Gastrocnemius medialis (tissue), 4 donors: ENCODE measurements at regions of chr12 and their contacts with region 1.

Region 1: DNA sequence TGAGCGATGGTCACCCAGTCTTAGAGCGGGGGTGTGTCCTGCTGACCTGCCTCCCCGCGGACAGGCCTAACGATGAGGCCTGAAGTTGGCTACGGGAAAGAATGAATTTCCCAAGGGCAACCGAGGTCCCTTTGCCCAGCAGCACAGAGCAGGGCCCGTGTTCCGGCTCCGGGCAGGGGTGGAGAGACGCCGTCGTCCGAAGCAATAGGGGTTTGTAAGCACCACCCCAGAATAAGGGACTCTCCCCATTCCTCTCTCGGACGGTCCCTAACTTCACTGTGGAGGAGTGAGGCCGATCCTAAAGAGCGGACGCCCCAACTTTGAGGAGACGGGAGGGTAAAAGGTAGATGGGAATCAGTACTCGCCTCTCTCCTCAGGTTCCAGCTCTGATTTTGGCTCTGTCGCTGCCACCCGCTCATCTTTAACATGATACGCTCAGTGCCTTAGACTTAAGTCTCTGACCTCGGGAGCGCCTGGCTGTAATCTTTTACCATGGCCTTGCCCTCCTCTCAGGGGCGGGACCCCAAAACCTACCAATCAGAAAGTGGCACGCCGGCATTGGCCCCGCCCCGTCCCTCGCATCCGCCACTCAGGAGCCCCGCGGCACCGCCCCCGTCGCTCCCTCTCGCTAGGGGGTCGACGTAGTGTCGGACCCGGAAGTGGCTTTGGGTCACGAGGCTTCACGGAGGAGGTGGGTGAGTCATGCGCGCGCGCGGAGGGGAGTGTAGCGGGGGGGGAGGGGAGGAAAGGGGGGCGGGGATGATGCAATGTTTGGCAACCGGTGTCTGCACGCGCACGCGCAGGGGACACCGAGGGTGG is at the start of gene DDIT3:
- DNase-seq: peak; percentile 99 to 100
- ATAC-seq: peak; percentile 59 to 70
- H3K4me3 ChIP-seq: peak within 1 kb of the TSS; percentile 79 to 87 (median 82)
- H3K27ac ChIP-seq: peak within 1 kb of the TSS; percentile 93 to 99 (median 96)
- H3K4me1 ChIP-seq: peaks cover 56 to 61% of the 10 kb centered on the region in 2 donors
- H3K27me3 ChIP-seq: no peaks in the 10 kb centered on the region
- CTCF ChIP-seq: no peak
- POLR2A ChIP-seq: peak; percentile 99
- total RNA-seq, gene DDIT3: 11.8 to 46.4 (median 17.1) TPM

Region 2: GRCh38 chr12:56636675-56637540 is 883.4 kb before region 1 on chr12:
- in situ Hi-C with region 1: loop called in 1 of 4 experiments (anchors 25 kb)
- intact Hi-C with region 1: loop called (anchors 10 kb)
- DNase-seq: peak; percentile 98 to 99
- ATAC-seq: peak; percentile 74 to 79
- H3K4me3 ChIP-seq: peak overlapping the region; percentile 73 to 88 (median 78)
- H3K27ac ChIP-seq: peak overlapping the region; percentile 95 to 99 (median 97)
- H3K4me1 ChIP-seq: peaks cover 36 to 64% of the 10 kb centered on the region in 2 donors
- H3K27me3 ChIP-seq: no peaks in the 10 kb centered on the region
- CTCF ChIP-seq: peak; percentile 47 to 75 (median 60)
- POLR2A ChIP-seq: peak in 1 of 2 donors; percentile 58

Region 3: GRCh38 chr12:57088459-57089248 is 431.6 kb before region 1 on chr12 and contains the start of gene NAB2:
- in situ Hi-C with region 1: no loop called
- intact Hi-C with region 1: loop called (anchors 10 kb)
- DNase-seq: peak; percentile 89 to 94
- ATAC-seq: peak; percentile 58 to 73
- H3K4me3 ChIP-seq: peak within 1 kb of the TSS; percentile 84 to 87 (median 85)
- H3K27ac ChIP-seq: peak within 1 kb of the TSS; percentile 94 to 97 (median 94)
- H3K4me1 ChIP-seq: peaks cover 0 to 27% of the 10 kb centered on the region in 2 donors
- H3K27me3 ChIP-seq: no peaks in the 10 kb centered on the region
- CTCF ChIP-seq: no peak
- POLR2A ChIP-seq: peak; percentile 68 to 80
- total RNA-seq, gene NAB2: 4.8 to 9.5 (median 5.5) TPM

Region 4: GRCh38 chr12:57459055-57459749 is 61.1 kb before region 1 on chr12:
- in situ Hi-C with region 1: no loop called
- intact Hi-C with region 1: loop called (anchors 1 kb)
- DNase-seq: peak; percentile 78 to 88
- ATAC-seq: peak; percentile 69
- H3K4me3 ChIP-seq: peak overlapping the region; percentile 63 to 82 (median 80)
- H3K27ac ChIP-seq: peak overlapping the region; percentile 54 to 79 (median 59)
- H3K4me1 ChIP-seq: peaks cover 47 to 54% of the 10 kb centered on the region in 2 donors
- H3K27me3 ChIP-seq: peaks cover 14 to 19% (median 18%) of the 10 kb centered on the region in 3 donors
- CTCF ChIP-seq: peak; percentile 95 to 96 (median 96)
- POLR2A ChIP-seq: peak; percentile 1 to 35

Region 5: GRCh38 chr12:57655541-57656240 is 135.4 kb after region 1 on chr12:
- in situ Hi-C with region 1: no loop called
- intact Hi-C with region 1: no loop called
- DNase-seq: no peak
- ATAC-seq: no peak
- H3K4me3 ChIP-seq: no peak overlapping the region
- H3K27ac ChIP-seq: no peak overlapping the region
- H3K4me1 ChIP-seq: no peaks in the 10 kb centered on the region
- H3K27me3 ChIP-seq: no peaks in the 10 kb centered on the region
- CTCF ChIP-seq: no peak
- POLR2A ChIP-seq: no peak

Region 6: GRCh38 chr12:57744777-57745484 is 224.7 kb after region 1 on chr12 and contains the start of gene TSPAN31:
- in situ Hi-C with region 1: no loop called
- intact Hi-C with region 1: loop called (anchors 2 kb)
- DNase-seq: peak; percentile 96 to 97
- ATAC-seq: peak; percentile 97 to 98
- H3K4me3 ChIP-seq: peak within 1 kb of the TSS; percentile 81 to 96 (median 94)
- H3K27ac ChIP-seq: peak within 1 kb of the TSS; percentile 93 to 99 (median 98)
- H3K4me1 ChIP-seq: peaks cover 6 to 12% of the 10 kb centered on the region in 2 donors
- H3K27me3 ChIP-seq: peaks cover 0 to 6% (median 3%) of the 10 kb centered on the region in 3 donors
- CTCF ChIP-seq: peak in 1 of 5 experiments; percentile 11
- POLR2A ChIP-seq: peak; percentile 49 to 65
- total RNA-seq, gene TSPAN31: 25.5 to 58.9 (median 32.2) TPM

Region 7: GRCh38 chr12:57941165-57941894 is 421.1 kb after region 1 on chr12 and contains the start of gene ATP23:
- in situ Hi-C with region 1: no loop called
- intact Hi-C with region 1: loop called (anchors 5 kb)
- DNase-seq: peak; percentile 80 to 83
- ATAC-seq: peak; percentile 89
- H3K4me3 ChIP-seq: peak within 1 kb of the TSS; percentile 78 to 97 (median 82)
- H3K27ac ChIP-seq: peak within 1 kb of the TSS; percentile 88 to 97 (median 94)
- H3K4me1 ChIP-seq: peaks cover 18 to 20% of the 10 kb centered on the region in 2 donors
- H3K27me3 ChIP-seq: no peaks in the 10 kb centered on the region
- CTCF ChIP-seq: no peak
- POLR2A ChIP-seq: peak; percentile 86 to 89
- total RNA-seq, gene ATP23: 7.1 to 26.4 (median 10.7) TPM